Esophagus muscularis mucosa (tissue), 4 donors: ENCODE measurements at regions of chr20 and their contacts with region 1.

Region 1: GRCh38 chr20:8790442-8791074 is 278.3 kb upstream of the PLCB4 start:
- DNase-seq: no peak
- H3K4me3 ChIP-seq: no peak overlapping the region
- H3K27ac ChIP-seq: no peak overlapping the region
- H3K4me1 ChIP-seq: peaks cover 8 to 13% (median 8%) of the 10 kb centered on the region in 4 donors
- H3K27me3 ChIP-seq: no peaks in the 10 kb centered on the region
- CTCF ChIP-seq: peak; percentile 91 to 96 (median 95)
- EP300 ChIP-seq: no peak
- POLR2A ChIP-seq: no peak

Region 2: GRCh38 chr20:9359561-9360308 is 569.2 kb after region 1 on chr20:
- intact Hi-C with region 1: loop called (anchors 5 kb)
- DNase-seq: no peak
- H3K4me3 ChIP-seq: no peak overlapping the region
- H3K27ac ChIP-seq: peak overlapping the region in 1 of 4 donors; percentile 37
- H3K4me1 ChIP-seq: peaks cover 8 to 37% (median 29%) of the 10 kb centered on the region in 4 donors
- H3K27me3 ChIP-seq: no peaks in the 10 kb centered on the region
- CTCF ChIP-seq: peak; percentile 50 to 54 (median 53)
- EP300 ChIP-seq: no peak
- POLR2A ChIP-seq: no peak

Region 3: DNA sequence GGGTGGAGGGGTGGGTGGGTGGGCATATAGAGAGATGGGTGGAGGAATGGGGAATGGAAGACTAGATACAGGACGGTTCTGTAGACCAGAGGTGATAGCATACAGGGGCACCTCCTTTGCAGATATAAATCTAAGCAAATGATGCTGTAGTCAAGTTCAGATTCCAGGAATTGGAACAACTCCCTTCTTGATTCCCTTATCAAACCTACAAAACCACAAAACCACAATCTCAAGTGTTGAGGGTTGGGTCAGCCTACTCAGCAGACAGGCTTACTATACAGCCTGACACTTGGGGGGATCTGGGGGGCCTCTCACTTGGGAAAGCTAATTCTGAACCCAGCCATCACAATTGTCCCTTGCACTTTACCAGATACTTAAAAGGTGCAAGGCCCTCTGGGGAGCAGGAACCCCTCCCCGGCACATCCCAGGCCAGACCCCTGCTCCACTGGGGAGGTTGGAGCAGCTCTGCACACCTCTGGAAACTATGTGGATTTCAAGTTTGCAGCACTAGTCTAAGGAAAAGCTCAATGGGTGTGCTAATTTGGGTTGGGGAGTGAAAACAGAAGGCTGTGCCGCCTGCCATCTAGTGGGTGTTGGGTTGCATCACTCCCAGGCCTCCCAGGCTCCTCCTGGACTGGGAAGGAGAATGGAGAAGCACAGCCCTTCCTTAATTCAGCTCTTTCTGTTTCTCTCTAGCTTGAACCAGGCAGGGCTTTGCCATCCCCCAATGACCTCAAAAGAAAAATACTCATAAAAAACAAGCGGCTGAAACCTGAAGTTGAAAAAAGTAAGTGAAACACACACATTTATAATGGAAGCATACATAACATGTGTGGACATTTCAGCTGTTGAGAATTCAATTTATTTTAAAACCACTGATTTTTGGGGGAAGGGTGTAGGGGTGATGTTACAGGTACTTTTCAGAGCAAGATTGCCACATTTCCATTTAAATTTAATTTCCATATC is 602.6 kb after region 1 on chr20:
- intact Hi-C with region 1: loop called (anchors 5 kb)
- DNase-seq: no peak
- H3K4me3 ChIP-seq: no peak overlapping the region
- H3K27ac ChIP-seq: no peak overlapping the region
- H3K4me1 ChIP-seq: peaks cover 0 to 35% (median 28%) of the 10 kb centered on the region in 4 donors
- H3K27me3 ChIP-seq: no peaks in the 10 kb centered on the region
- CTCF ChIP-seq: peak; percentile 71 to 86 (median 78)
- EP300 ChIP-seq: no peak
- POLR2A ChIP-seq: no peak